ENCODE measurements at regions of chr10 and their contacts with region 1.

Region 1: GRCh38 chr10:118369641-118370205 is 27.6 kb upstream of the FAM204A start:
- DNase-seq: no peak
- ATAC-seq: no peak
- H3K4me3 ChIP-seq: no peak overlapping the region
- H3K4me3 Mint-ChIP-seq: no peak overlapping the region
- H3K27ac ChIP-seq: no peak overlapping the region
- H3K27ac Mint-ChIP-seq: no peak overlapping the region
- H3K4me1 ChIP-seq: no peaks in the 10 kb centered on the region
- H3K4me1 Mint-ChIP-seq: no peaks in the 10 kb centered on the region
- H3K27me3 ChIP-seq: no peaks in the 10 kb centered on the region
- H3K27me3 Mint-ChIP-seq: peaks cover 24 to 27% of the 10 kb centered on the region in 2 donors

Region 2: DNA sequence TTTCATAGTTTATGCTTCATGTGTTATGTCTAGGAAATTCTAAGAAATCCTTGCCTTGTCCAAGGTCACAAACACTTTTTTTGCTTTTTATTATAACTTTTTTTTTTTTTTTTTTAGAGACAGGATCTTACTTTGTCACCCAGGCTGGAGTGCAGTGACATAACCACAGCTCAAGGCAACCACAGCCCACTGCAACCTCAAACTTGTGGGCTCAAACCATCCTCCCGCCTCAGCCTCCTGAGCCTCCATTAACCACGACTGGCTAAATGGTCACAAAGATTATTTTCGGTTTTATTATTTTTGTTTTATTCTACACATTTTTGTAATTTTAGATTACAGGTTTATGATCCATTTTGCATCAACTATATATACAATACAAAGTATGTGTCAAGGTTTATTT is 20.5 kb before region 1 on chr10:
- CTCF ChIA-PET with region 1: interaction called in 1 of 2 experiments, 11 read pairs
- POLR2A ChIA-PET with region 1: no interaction called
- DNase-seq: no peak
- ATAC-seq: no peak
- H3K4me3 ChIP-seq: no peak overlapping the region
- H3K4me3 Mint-ChIP-seq: no peak overlapping the region
- H3K27ac ChIP-seq: no peak overlapping the region
- H3K27ac Mint-ChIP-seq: no peak overlapping the region
- H3K4me1 ChIP-seq: no peaks in the 10 kb centered on the region
- H3K4me1 Mint-ChIP-seq: no peaks in the 10 kb centered on the region
- H3K27me3 ChIP-seq: peaks cover 5 to 6% of the 10 kb centered on the region in 2 experiments
- H3K27me3 Mint-ChIP-seq: peaks cover 20 to 23% of the 10 kb centered on the region in 2 donors

Measured in T-cell (primary cell).